Ovary (tissue), 10 donors: ENCODE measurements at regions of chr1 and their contacts with region 1.

Region 1: DNA sequence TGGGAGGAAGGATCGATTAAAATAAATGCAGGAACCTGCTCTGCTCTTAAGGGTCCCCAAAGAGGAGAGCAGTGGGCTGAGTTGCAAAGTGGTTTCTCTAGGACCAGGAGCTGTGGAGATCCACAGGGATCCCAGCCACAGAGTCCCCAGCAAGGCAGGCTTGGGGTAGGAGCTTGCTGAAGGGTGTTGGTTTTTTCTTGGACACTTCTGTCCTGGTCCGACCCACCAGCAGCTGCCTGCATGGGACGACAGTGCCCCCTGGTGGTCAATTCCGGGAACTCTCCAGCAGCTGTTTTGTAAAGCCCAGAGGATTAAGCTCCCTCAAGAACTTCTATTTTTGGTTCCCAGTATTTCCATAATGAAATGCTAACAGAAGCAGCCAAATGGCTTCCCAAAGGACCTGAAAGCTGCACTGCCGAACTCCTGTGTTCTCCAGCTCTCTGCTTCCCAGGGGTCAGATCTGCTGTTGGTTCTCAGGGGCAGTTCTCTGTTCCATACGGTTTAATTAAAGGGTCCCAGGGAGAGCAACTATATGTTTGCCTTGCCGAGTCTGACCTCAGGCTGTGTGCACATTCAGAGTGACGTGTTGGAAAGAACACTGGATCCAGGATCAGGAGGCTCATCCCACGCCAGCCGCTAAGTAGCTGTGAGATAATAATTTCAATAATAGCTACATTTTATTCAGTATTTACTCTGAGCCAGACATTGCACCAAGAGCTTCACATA is 23.2 kb downstream of the NENF start:
- DNase-seq: peak; percentile 70 to 91 (median 91)
- H3K4me3 ChIP-seq: no peak overlapping the region
- H3K27ac ChIP-seq: no peak overlapping the region
- H3K4me1 ChIP-seq: peaks cover 8% of the 10 kb centered on the region
- H3K27me3 ChIP-seq: no peaks in the 10 kb centered on the region
- CTCF ChIP-seq: peak; percentile 86 to 95 (median 89)
- EP300 ChIP-seq: no peak
- POLR2A ChIP-seq: no peak

Region 2: GRCh38 chr1:211675230-211676105 is 780.5 kb before region 1 on chr1 and contains the start of gene NEK2:
- intact Hi-C with region 1: loop called in 2 of 4 experiments (anchors 5 to 10 kb)
- DNase-seq: peak; percentile 84 to 92 (median 88)
- H3K4me3 ChIP-seq: peak within 1 kb of the TSS; percentile 53
- H3K27ac ChIP-seq: no peak within 1 kb of the TSS
- H3K4me1 ChIP-seq: peaks cover 3% of the 10 kb centered on the region
- H3K27me3 ChIP-seq: no peaks in the 10 kb centered on the region
- CTCF ChIP-seq: no peak
- EP300 ChIP-seq: no peak
- POLR2A ChIP-seq: no peak
- total RNA-seq, gene NEK2: 0.20 to 1.8 (median 0.40) TPM in 3 of 7 donors, not detected in the others

Region 3: GRCh38 chr1:212062832-212063438 is 393.0 kb before region 1 on chr1:
- intact Hi-C with region 1: loop called in 1 of 4 experiments (anchors 5 kb)
- DNase-seq: no peak
- H3K4me3 ChIP-seq: no peak overlapping the region
- H3K27ac ChIP-seq: no peak overlapping the region
- H3K4me1 ChIP-seq: no peaks in the 10 kb centered on the region
- H3K27me3 ChIP-seq: no peaks in the 10 kb centered on the region
- CTCF ChIP-seq: peak; percentile 17 to 47 (median 44)
- EP300 ChIP-seq: no peak
- POLR2A ChIP-seq: no peak

Region 4: DNA sequence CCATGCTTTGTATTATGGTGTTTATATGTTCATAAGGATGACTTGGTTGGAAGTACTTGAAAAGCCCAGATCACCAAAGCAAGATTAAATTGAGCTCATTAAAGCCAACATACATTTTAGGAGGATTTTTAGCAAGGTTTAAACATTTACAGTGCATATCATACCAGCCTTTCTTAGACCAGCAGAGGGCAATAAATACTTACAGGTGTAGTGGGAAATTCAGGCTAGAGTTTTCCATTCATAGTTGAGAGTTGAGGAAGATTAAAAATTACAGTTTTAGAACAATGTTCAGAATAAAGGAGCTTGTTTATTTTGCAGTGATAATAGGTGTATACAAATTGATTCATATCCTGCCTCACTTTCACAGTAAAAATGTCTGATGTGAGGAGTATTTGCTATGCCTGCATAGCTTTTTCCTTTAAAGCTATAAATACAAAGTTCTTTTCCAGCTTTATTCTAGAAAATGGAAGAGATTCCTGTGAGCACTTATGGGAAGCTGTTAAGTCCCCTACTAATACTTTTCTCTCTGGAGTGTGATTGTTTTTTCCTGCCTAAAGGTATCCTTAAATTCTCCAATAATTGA is 385.2 kb before region 1 on chr1:
- intact Hi-C with region 1: loop called in 2 of 4 experiments (anchors 5 kb)
- DNase-seq: no peak
- H3K4me3 ChIP-seq: no peak overlapping the region
- H3K27ac ChIP-seq: no peak overlapping the region
- H3K4me1 ChIP-seq: no peaks in the 10 kb centered on the region
- H3K27me3 ChIP-seq: no peaks in the 10 kb centered on the region
- CTCF ChIP-seq: peak; percentile 11 to 42 (median 26)
- EP300 ChIP-seq: no peak
- POLR2A ChIP-seq: no peak

Region 5: GRCh38 chr1:212205843-212206242 is 250.1 kb before region 1 on chr1:
- intact Hi-C with region 1: no loop called
- DNase-seq: no peak
- H3K4me3 ChIP-seq: no peak overlapping the region
- H3K27ac ChIP-seq: no peak overlapping the region
- H3K4me1 ChIP-seq: no peaks in the 10 kb centered on the region
- H3K27me3 ChIP-seq: no peaks in the 10 kb centered on the region
- CTCF ChIP-seq: no peak
- EP300 ChIP-seq: no peak
- POLR2A ChIP-seq: no peak

Region 6: DNA sequence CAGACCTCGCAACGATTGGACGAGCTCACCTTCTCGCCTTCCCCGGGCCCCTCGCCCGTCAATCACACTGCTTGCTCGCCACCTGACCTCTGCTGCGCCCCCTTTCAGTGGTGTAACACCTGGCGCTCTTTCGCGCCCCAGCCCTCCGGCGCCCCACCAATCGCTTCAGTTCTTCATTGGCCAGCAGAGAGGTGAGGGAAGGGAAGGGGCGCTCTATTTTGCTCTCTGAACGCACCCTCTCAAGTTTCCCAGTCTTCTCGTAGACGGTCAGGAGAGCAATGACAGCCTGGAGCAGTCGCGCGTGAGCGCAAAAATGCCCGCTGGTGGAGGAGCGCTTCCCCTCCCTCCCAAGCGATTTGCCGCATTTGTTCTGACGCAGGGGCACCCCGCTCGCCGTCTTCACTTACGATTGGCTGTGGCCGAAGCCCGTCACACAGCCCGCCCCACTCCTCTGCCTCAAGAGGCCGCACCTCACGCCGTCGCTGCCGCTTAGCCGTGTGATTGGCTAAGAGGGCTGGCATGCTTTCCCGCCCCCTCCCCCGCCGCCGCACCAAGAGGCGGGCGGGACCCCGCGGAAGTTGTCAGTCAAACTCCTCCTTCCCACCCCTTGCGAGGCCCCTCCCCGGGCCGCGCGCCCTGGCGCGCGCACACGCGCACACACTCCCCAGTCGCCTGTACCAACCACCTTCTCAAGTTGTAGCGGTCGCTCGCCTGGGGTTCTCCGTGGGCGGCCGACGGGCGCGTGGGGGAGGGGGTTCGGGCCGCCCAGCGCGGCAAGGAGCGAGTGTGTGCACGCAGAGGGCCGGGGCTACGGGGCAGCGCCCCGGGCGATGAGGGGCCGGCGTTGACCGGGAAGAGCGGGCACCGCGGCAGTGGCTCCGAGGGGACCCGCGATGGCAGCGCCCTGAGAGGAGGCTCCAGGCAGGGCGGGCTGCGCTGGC is 171.0 kb before region 1 on chr1 and contains the start of gene PPP2R5A:
- intact Hi-C with region 1: loop called in 2 of 4 experiments (anchors 10 kb)
- DNase-seq: peak; percentile 98 to 99 (median 99)
- H3K4me3 ChIP-seq: peak within 1 kb of the TSS; percentile 91
- H3K27ac ChIP-seq: peak within 1 kb of the TSS; percentile 93 to 94
- H3K4me1 ChIP-seq: peaks cover 4% of the 10 kb centered on the region
- H3K27me3 ChIP-seq: no peaks in the 10 kb centered on the region
- CTCF ChIP-seq: no peak
- EP300 ChIP-seq: peak; percentile 51
- POLR2A ChIP-seq: peak; percentile 84
- total RNA-seq, gene PPP2R5A: 17.4 to 20.9 (median 19.0) TPM